Common myeloid progenitor, CD34-positive (primary cell): ENCODE measurements at regions of chr19 and their contacts with region 1.

Region 1: DNA sequence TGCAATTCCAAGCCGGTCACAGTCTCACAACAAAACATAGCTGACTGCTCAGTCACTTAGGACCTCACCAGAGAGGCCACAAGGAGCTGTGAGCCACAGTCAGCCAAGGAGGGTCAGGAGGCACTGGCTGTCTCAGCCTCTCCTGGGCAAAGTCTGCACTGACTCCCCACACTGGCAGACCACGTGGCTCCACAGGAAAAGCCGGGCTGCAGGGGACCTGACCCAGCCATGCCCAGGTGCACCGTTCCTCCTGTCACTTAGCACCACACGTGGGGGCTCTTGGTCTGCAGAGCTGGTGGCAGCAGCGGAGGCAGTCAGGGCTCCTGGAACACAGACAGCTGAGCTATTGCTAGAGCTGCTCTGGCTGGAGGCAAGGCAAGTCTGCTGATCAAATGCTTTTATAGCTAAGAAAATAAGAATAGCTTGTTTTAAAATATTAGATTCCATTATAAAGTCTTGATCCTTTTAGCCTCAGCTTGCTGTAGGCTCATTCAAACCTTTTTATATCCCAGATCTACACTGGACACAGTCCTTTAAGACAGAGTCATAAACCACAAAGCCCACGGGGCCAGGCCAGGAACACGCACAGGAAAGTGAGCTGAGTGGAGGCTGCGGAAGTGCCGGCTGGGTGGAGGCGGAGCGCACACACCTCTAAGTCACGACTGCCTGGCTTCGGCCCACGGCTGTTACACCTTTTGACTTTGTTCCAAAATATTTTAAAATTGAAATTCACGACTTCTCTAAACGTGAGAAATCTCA is 744.1 kb downstream of the UQCRFS1 start:
- DNase-seq: peak; percentile 62 to 79 (median 74)
- H3K4me3 ChIP-seq: peak overlapping the region in 3 of 7 experiments; percentile 3 to 56 (median 36)
- H3K27ac ChIP-seq: peak overlapping the region in 1 of 2 experiments; percentile 47
- H3K4me1 ChIP-seq: peaks cover 0 to 74% (median 38%) of the 10 kb centered on the region in 4 experiments
- H3K27me3 ChIP-seq: no peaks in the 10 kb centered on the region

Region 2: DNA sequence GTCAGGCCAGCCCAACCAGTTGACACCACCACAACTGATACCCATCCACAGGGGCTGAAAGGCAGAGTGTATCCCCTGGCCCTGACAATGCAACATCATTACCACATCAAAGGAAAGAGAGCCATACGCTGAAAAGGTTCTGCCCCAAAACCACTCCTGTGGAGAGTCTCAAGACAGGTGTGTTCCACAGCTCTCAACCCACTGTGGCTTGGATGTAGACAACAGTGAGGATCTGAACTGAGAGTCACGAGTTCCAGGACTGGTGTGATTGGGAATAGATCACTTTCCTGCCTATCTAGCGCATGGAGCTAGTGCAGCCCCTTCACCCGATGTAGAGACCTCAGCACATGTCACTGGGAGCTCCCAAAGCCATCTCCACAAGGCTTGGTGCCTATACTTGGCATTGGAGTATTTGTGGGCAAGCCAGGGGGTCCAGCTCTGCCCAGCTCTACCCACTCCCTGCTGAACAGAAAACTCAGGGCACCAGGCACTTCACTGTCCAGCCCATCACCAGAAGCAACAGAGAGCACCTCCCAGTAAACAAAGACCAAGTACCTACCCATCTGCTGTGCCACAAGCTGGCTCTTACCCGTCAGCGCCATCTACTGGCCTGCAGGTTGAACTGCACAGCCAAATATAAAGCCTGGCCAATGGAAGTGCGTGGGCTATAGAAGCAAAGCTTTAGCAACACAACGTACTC is 164.6 kb after region 1 on chr19:
- CTCF ChIA-PET with region 1: interaction called, 11 read pairs
- POLR2A ChIA-PET with region 1: interaction called, 3 read pairs
- DNase-seq: peak; percentile 57 to 75 (median 69)
- H3K4me3 ChIP-seq: no peak overlapping the region
- H3K27ac ChIP-seq: no peak overlapping the region
- H3K4me1 ChIP-seq: peaks cover 0 to 9% (median 4%) of the 10 kb centered on the region in 4 experiments
- H3K27me3 ChIP-seq: no peaks in the 10 kb centered on the region